ENCODE measurements at regions of chr3 and their contacts with region 1.

Region 1: DNA sequence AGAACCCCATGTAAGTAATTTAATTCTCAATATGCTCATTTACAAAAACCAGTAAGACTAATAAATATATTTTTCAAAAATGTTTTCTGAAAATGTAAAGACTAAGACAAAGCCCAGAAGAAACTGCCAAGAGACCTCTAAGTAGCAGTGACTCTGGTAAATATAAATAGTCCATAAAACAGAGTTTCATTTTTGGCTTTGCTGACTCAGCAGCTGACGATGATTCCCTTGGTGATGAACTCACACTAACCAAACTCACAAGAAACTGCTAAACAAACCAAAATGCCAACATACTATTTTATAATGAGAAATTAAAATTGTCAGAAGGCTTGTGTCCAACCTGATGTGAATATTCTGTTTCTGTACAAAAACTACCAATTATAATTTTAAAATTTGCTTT is 31.5 kb upstream of the IMPG2 start:
- DNase-seq: no peak
- ATAC-seq: no peak
- H3K4me3 ChIP-seq: no peak overlapping the region
- H3K4me3 Mint-ChIP-seq: no peak overlapping the region
- H3K27ac ChIP-seq: no peak overlapping the region
- H3K27ac Mint-ChIP-seq: no peak overlapping the region
- H3K4me1 ChIP-seq: no peaks in the 10 kb centered on the region
- H3K4me1 Mint-ChIP-seq: peaks cover 2% of the 10 kb centered on the region
- H3K27me3 ChIP-seq: no peaks in the 10 kb centered on the region
- H3K27me3 Mint-ChIP-seq: no peaks in the 10 kb centered on the region
- CTCF ChIP-seq: no peak

Region 2: GRCh38 chr3:101340591-101340990 is 11.2 kb before region 1 on chr3:
- CTCF ChIA-PET with region 1: no interaction called
- POLR2A ChIA-PET with region 1: no interaction called
- intact Hi-C with region 1: loop called in 1 of 2 experiments (anchors 2 kb)
- DNase-seq: no peak
- ATAC-seq: no peak
- H3K4me3 ChIP-seq: no peak overlapping the region
- H3K4me3 Mint-ChIP-seq: no peak overlapping the region
- H3K27ac ChIP-seq: no peak overlapping the region
- H3K27ac Mint-ChIP-seq: no peak overlapping the region
- H3K4me1 ChIP-seq: no peaks in the 10 kb centered on the region
- H3K4me1 Mint-ChIP-seq: no peaks in the 10 kb centered on the region
- H3K27me3 ChIP-seq: no peaks in the 10 kb centered on the region
- H3K27me3 Mint-ChIP-seq: no peaks in the 10 kb centered on the region
- CTCF ChIP-seq: no peak

Region 3: GRCh38 chr3:101362408-101362807 is 10.6 kb after region 1 on chr3:
- CTCF ChIA-PET with region 1: no interaction called
- POLR2A ChIA-PET with region 1: no interaction called
- intact Hi-C with region 1: no loop called
- DNase-seq: no peak
- ATAC-seq: no peak
- H3K4me3 ChIP-seq: no peak overlapping the region
- H3K4me3 Mint-ChIP-seq: no peak overlapping the region
- H3K27ac ChIP-seq: no peak overlapping the region
- H3K27ac Mint-ChIP-seq: no peak overlapping the region
- H3K4me1 ChIP-seq: no peaks in the 10 kb centered on the region
- H3K4me1 Mint-ChIP-seq: peaks cover under 1% of the 10 kb centered on the region
- H3K27me3 ChIP-seq: no peaks in the 10 kb centered on the region
- H3K27me3 Mint-ChIP-seq: no peaks in the 10 kb centered on the region
- CTCF ChIP-seq: no peak

Region 4: GRCh38 chr3:101556064-101556463 is 204.2 kb after region 1 on chr3:
- CTCF ChIA-PET with region 1: no interaction called
- POLR2A ChIA-PET with region 1: no interaction called
- intact Hi-C with region 1: no loop called
- DNase-seq: no peak
- ATAC-seq: no peak
- H3K4me3 ChIP-seq: no peak overlapping the region
- H3K4me3 Mint-ChIP-seq: no peak overlapping the region
- H3K27ac ChIP-seq: no peak overlapping the region
- H3K27ac Mint-ChIP-seq: no peak overlapping the region
- H3K4me1 ChIP-seq: no peaks in the 10 kb centered on the region
- H3K4me1 Mint-ChIP-seq: peaks cover 6% of the 10 kb centered on the region
- H3K27me3 ChIP-seq: no peaks in the 10 kb centered on the region
- H3K27me3 Mint-ChIP-seq: peaks cover 11% of the 10 kb centered on the region
- CTCF ChIP-seq: no peak

Measured in CD8-positive, alpha-beta T cell (primary cell).